SK-N-SH (cell line): ENCODE measurements at regions of chr1 and their contacts with region 1.

Region 1: GRCh38 chr1:48498096-48498791 is 26.2 kb upstream of the SPATA6 start:
- DNase-seq: peak; percentile 78
- H3K4me3 ChIP-seq: peak overlapping the region in 1 of 2 experiments; percentile 28; a peak in 1 of 4 replicates
- H3K27ac ChIP-seq: no peak overlapping the region
- H3K4me1 ChIP-seq: peaks cover 0 to 13% of the 10 kb centered on the region in 2 experiments; a peak in 1 of 4 replicates
- H3K27me3 ChIP-seq: no peaks in the 10 kb centered on the region
- CTCF ChIP-seq: peak; percentile 96
- EP300 ChIP-seq: no peak
- RAD21 ChIP-seq: peak; percentile 84

Region 2: GRCh38 chr1:48109390-48110013 is 388.7 kb before region 1 on chr1:
- CTCF ChIA-PET with region 1: interaction called, 26 read pairs
- POLR2A ChIA-PET with region 1: no interaction called
- DNase-seq: peak; percentile 36
- H3K4me3 ChIP-seq: no peak overlapping the region
- H3K27ac ChIP-seq: no peak overlapping the region
- H3K4me1 ChIP-seq: no peaks in the 10 kb centered on the region
- H3K27me3 ChIP-seq: no peaks in the 10 kb centered on the region; the same call in 1 of the 2 replicates
- CTCF ChIP-seq: peak; percentile 86
- EP300 ChIP-seq: no peak
- RAD21 ChIP-seq: peak; percentile 93

Region 3: DNA sequence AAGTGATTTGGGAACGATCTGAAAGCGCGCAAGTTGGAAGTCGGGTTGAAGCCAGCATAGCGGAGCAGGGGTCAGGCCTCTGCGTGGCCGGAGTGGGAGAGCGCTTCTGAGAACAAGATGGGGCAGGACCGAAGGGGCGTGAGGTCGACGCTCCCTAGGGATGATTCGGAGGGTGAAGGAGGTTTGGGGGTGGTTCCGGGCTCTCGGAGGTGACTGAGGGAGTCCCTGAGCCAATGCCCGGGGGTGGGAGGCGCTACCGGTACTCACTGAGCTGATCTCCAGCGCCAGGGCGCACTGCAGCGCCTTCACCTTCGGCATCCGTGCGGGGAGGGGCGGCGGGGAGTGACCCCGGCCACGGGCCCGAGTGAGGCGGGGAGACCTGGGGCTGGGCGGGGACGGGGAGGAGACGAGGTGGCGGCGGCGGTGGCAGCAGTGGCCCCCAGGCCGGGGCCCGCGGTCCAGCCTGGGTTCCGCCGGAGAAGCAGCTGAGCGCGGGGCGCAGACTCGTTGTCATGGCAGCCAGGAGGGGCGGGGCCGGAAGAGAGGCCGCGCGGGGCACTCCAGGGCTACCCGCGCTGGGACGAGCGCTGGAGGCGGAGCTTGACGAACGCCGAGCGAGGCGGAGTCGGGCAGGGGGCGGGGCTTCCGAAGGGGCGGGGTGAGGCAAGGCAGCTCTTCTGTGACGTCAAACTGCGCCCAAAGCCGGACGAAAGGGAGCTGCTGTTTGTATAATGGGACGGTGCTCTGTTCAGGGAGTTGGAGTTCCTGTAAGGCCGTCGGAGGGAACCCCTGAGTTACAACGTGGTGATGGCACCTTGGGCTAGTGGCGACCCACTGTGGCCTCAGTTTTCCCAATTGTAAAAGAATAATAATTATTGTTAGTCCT is 26.3 kb before region 1 on chr1 and contains the start of gene SPATA6:
- CTCF ChIA-PET with region 1: interaction called, 22 read pairs
- POLR2A ChIA-PET with region 1: interaction called, 3 read pairs
- DNase-seq: peak; percentile 97
- H3K4me3 ChIP-seq: peak within 1 kb of the TSS; percentile 78 to 90
- H3K27ac ChIP-seq: peak within 1 kb of the TSS; percentile 77 to 82
- H3K4me1 ChIP-seq: peaks cover 14 to 22% of the 10 kb centered on the region in 2 experiments
- H3K27me3 ChIP-seq: no peaks in the 10 kb centered on the region
- CTCF ChIP-seq: no peak
- EP300 ChIP-seq: no peak
- RAD21 ChIP-seq: no peak
- polyA plus RNA-seq, gene SPATA6: 2.4 and 2.5 TPM in 2 replicates

Region 4: DNA sequence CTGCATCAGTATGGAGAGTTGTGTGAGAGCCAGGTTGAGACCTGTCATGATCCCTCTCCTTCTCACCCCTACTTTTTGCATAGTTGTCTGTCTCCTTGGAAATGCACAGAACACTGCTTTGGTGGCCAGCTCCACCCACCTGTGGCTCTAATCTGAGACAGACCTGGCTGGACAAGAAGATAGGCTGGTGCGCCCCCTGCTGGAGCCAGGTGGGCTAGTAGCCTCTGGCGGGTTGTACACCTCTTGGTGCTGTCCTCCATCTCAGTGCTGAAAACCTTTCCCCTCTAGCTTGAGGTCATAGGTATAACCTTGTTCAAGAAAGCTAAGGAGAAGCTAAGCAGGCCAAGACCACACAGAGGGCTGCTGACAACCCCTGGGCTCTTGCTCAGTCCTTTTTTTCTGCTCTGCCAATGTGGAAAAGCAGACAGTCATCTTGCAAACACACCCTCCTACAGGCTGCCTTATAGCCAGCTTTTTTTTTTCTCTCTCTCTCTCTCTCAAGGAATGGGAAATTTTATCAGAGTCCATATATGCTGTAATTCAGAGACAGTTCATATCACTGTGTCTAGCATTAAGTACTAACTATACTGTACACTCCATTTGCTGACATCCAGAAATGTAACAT is 32.6 kb after region 1 on chr1:
- CTCF ChIA-PET with region 1: interaction called, 22 read pairs
- POLR2A ChIA-PET with region 1: no interaction called
- DNase-seq: peak; percentile 50
- H3K4me3 ChIP-seq: peak overlapping the region in 1 of 2 experiments; percentile 32; a peak in 1 of 4 replicates
- H3K27ac ChIP-seq: no peak overlapping the region
- H3K4me1 ChIP-seq: peaks cover 0 to 9% of the 10 kb centered on the region in 2 experiments; a peak in 1 of 4 replicates
- H3K27me3 ChIP-seq: no peaks in the 10 kb centered on the region; the same call in 1 of the 2 replicates
- CTCF ChIP-seq: peak; percentile 66
- EP300 ChIP-seq: no peak
- RAD21 ChIP-seq: peak; percentile 56

Region 5: GRCh38 chr1:48688102-48688760 is 190.0 kb after region 1 on chr1:
- CTCF ChIA-PET with region 1: no interaction called
- POLR2A ChIA-PET with region 1: no interaction called
- DNase-seq: peak; percentile 36
- H3K4me3 ChIP-seq: no peak overlapping the region
- H3K27ac ChIP-seq: no peak overlapping the region
- H3K4me1 ChIP-seq: peaks cover 0 to 2% of the 10 kb centered on the region in 2 experiments; a peak in 1 of 4 replicates
- H3K27me3 ChIP-seq: peaks cover 6% of the 10 kb centered on the region; the same call in 1 of the 2 replicates
- CTCF ChIP-seq: peak; percentile 53
- EP300 ChIP-seq: no peak
- RAD21 ChIP-seq: no peak

Region 6: GRCh38 chr1:50348449-50349241 is 1850.4 kb after region 1 on chr1:
- CTCF ChIA-PET with region 1: interaction called, 14 read pairs
- POLR2A ChIA-PET with region 1: no interaction called
- DNase-seq: peak; percentile 77
- H3K4me3 ChIP-seq: no peak overlapping the region
- H3K27ac ChIP-seq: peak overlapping the region in 1 of 2 experiments; percentile 48; a peak in 1 of 4 replicates
- H3K4me1 ChIP-seq: peaks cover 0 to 23% of the 10 kb centered on the region in 2 experiments; a peak in 2 of 4 replicates
- H3K27me3 ChIP-seq: no peaks in the 10 kb centered on the region
- CTCF ChIP-seq: peak; percentile 82
- EP300 ChIP-seq: peak in 1 of 2 experiments; percentile 30; a peak in 1 of 4 replicates
- RAD21 ChIP-seq: peak; percentile 99